Panc1 (cell line): ENCODE measurements at regions of chr11 and their contacts with region 1.

Region 1: DNA sequence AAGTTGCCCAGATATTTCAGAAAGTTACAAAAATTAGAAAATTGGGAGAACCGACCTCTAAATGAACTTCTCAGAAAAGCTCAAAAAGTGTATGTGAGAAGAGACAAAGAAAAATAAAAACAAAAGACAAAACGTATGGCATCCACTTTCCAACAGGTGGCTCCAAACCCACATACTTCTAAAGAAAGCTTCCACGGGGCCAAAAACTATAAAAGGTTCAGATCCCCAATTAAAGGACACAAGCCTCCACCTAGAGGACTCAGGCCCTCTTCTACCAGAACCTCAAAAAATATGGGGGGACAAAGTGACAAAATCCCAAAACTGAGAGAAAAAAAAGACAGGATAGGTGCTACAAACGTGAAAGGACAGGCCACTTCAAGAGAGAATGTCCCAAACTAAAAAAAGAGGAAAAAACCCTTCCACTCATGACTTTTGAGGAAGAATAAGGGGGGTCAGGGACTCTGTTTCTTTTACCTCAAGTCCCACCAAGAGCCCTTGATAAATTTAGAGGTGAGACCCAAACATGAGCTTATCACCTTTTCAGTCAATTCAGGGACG is 8.8 kb downstream of the SCGB2A1 start:
- DNase-seq: no peak
- ATAC-seq: no peak
- H3K4me3 ChIP-seq: no peak overlapping the region
- H3K27ac ChIP-seq: no peak overlapping the region
- H3K4me1 ChIP-seq: no peaks in the 10 kb centered on the region
- H3K27me3 ChIP-seq: no peaks in the 10 kb centered on the region
- CTCF ChIP-seq: peak; percentile 73

Region 2: DNA sequence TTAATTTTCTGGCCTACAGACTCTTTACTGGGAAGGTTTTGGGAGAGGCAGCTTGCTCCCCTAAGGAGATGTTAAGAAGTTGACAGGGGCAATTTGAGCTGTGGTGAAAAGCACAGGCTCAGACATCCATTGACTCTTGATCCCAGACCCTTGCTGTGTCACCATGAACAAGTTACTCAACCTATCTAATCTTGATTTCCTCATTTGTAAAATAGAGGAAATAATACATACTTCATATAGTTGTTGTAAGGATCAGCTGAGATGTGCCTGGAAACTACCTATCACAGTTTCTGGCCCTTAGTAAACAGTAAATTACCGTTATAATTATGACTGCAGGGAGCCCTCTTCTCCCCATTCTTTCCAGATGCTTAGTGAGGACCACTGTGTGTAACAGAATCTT is 98.2 kb after region 1 on chr11:
- CTCF ChIA-PET with region 1: interaction called, 3 read pairs
- POLR2A ChIA-PET with region 1: no interaction called
- in situ Hi-C with region 1: no loop called
- intact Hi-C with region 1: loop called (anchors 1 kb)
- DNase-seq: no peak
- ATAC-seq: no peak
- H3K4me3 ChIP-seq: no peak overlapping the region
- H3K27ac ChIP-seq: no peak overlapping the region
- H3K4me1 ChIP-seq: no peaks in the 10 kb centered on the region
- H3K27me3 ChIP-seq: 0 out of 2 replicates have a peak, but pooled peaks cover 2% of the 10 kb centered on the region
- CTCF ChIP-seq: no peak